Spleen (tissue), 13 donors: ENCODE measurements at regions of chr5 and their contacts with region 1.

Region 1: DNA sequence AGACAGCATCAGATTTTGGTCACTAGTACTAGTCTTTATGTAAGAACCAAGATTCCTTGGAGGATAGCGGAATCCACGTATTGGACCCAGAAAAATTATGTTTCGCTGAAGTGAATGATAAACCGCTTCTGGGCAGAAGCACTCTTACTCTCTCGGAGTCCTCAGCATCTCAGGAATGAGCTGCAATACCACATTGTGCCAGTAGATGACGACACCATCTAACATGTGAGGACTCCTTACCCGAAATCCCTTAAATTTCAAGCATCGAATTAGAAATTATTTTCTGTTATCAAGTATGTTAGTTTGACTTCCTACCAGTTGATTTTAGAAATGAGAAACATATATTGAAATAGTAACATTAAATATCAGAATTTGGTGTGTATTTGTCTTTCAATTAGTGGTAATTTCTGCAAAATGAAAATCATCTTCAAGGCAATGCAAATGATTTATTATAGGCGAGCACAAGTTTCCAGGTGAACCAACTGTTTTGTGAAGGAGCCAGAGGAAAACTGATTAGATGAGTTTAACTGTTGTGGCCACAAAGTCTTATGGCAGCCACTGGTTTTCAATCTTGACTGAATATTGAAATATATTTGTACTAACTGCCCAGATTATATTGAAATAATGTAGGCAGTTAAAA is 66.0 kb upstream of the CAMK4 start:
- DNase-seq: no peak
- H3K4me3 ChIP-seq: no peak overlapping the region
- H3K27ac ChIP-seq: no peak overlapping the region
- H3K4me1 ChIP-seq: peaks cover 0 to 6% (median 5%) of the 10 kb centered on the region in 6 donors
- H3K27me3 ChIP-seq: no peaks in the 10 kb centered on the region
- CTCF ChIP-seq: peak; percentile 81 to 97 (median 91)
- POLR2A ChIP-seq: no peak

Region 2: GRCh38 chr5:111280282-111280951 is 122.2 kb after region 1 on chr5:
- intact Hi-C with region 1: loop called (anchors 10 kb)
- DNase-seq: no peak
- H3K4me3 ChIP-seq: no peak overlapping the region
- H3K27ac ChIP-seq: no peak overlapping the region
- H3K4me1 ChIP-seq: no peaks in the 10 kb centered on the region
- H3K27me3 ChIP-seq: no peaks in the 10 kb centered on the region
- CTCF ChIP-seq: no peak
- POLR2A ChIP-seq: no peak